Activated CD4-positive, alpha-beta T cell treated with anti-CD3 and anti-CD28 coated beads for 36 hours (primary cell): ENCODE measurements at regions of chr12 and their contacts with region 1.

Region 1: DNA sequence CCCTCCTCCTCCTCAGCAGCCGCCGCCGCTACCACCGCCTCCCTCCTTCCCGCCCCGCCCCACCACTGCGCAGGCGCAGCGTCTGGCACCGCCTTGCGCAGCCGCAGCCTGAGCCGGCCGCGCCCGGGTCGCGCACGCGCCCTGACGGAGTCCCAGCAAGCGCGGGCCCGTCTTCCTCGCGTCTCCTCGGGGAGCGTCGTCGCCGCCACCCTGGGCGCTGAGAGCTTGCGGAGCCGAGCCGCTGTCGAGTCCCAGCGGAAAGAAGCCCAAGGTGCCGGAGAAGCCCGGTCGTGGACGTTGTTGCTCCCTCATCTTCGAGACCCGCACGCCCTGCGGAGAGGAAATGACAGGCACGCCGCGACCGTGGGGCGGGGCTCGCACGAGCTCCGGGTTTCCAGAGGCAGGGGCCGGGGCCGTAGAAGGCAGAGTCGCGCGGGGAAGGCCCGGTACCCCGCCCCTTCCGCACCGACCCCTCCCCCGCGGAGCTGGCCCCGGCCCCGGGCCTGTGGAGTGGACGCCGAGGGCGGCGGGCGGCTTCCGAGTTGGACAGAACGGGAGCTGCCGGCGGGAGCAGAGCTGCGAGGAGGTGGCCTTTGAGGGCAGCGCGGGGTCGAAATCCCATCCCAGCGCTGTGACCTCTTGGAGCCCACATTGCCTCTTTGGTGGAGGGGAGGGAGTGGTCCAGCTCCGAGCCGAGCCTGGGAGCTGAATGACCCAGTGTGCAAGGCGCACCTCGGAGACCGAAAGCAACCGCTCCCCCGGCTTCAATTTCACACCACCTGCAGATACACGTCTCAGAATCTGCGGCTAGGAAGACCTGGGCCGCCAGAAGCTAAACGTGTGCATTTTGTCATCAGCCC is 469 bp upstream of the RAB35 start:
- DNase-seq: peak; percentile 99
- ATAC-seq: peak; percentile 68
- H3K4me3 Mint-ChIP-seq: peak overlapping the region; percentile 85
- H3K27ac Mint-ChIP-seq: peak overlapping the region; percentile 87
- H3K4me1 Mint-ChIP-seq: peaks cover 77% of the 10 kb centered on the region
- H3K27me3 Mint-ChIP-seq: no peaks in the 10 kb centered on the region

Region 2: GRCh38 chr12:119667577-119668323 is 449.3 kb before region 1 on chr12 and contains the start of gene PRKAB1:
- CTCF ChIA-PET with region 1: no interaction called
- POLR2A ChIA-PET with region 1: no interaction called
- intact Hi-C with region 1: loop called in 1 of 2 experiments (anchors 1 kb)
- DNase-seq: peak; percentile 98
- ATAC-seq: peak; percentile 96
- H3K4me3 Mint-ChIP-seq: peak within 1 kb of the TSS; percentile 91
- H3K27ac Mint-ChIP-seq: peak within 1 kb of the TSS; percentile 91
- H3K4me1 Mint-ChIP-seq: peaks cover 48% of the 10 kb centered on the region
- H3K27me3 Mint-ChIP-seq: no peaks in the 10 kb centered on the region
- total RNA-seq, gene PRKAB1: 18.0 to 21.7 TPM

Region 3: DNA sequence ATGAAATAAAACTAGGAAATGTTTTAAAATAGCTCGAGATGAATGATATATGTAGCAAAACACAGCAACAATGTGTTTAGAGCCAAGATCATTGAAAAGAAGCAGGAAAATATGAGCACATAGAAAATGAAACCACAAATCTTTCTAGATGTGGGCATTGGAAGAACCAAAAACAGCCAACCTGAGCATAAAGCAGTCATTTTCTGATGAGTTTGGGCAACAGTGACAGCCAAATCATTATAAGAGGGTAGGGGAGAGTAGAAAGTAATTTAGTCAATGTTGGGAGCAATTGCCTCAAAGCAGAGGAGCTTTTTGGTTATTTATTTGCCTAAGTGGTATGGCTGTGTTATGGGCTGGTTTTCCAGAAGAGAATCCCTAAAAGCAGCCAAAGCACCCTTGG is 136.8 kb before region 1 on chr12:
- CTCF ChIA-PET with region 1: no interaction called
- POLR2A ChIA-PET with region 1: interaction called, 5 read pairs
- intact Hi-C with region 1: loop called in 1 of 2 experiments (anchors 1 kb)
- DNase-seq: peak; percentile 21
- ATAC-seq: peak; percentile 96
- H3K4me3 Mint-ChIP-seq: peak overlapping the region; percentile 30
- H3K27ac Mint-ChIP-seq: peak overlapping the region; percentile 69
- H3K4me1 Mint-ChIP-seq: peaks cover 23% of the 10 kb centered on the region
- H3K27me3 Mint-ChIP-seq: peaks cover 6% of the 10 kb centered on the region

Region 4: DNA sequence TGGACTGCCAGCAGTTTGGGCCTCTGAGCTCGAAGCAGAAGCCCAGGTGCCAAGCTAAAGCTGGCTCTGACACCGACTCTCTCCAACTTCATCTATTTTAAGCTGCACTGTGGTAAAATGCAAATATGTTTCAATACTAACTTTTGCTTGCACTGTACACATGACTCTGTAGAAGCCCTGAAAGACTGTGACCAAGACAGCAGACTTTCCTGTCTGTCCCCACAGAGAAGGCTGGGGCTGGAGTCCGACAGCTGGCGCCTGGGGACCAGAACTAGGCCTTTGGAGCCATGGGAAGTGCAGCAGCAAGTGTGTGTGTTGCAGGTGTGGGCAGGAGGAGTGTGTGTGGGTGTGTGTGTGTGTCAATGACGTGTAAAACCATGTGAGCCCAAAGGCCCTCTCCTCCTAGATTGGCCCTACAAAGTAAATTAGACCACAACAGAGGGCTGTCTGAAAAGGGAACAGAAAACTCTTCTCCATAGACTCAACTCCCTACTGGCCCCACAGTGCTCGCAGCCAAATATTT is 15.9 kb after region 1 on chr12:
- CTCF ChIA-PET with region 1: no interaction called
- POLR2A ChIA-PET with region 1: interaction called, 10 read pairs
- intact Hi-C with region 1: no loop called
- DNase-seq: no peak
- ATAC-seq: no peak
- H3K4me3 Mint-ChIP-seq: no peak overlapping the region
- H3K27ac Mint-ChIP-seq: peak overlapping the region; percentile 25
- H3K4me1 Mint-ChIP-seq: peaks cover 6% of the 10 kb centered on the region
- H3K27me3 Mint-ChIP-seq: no peaks in the 10 kb centered on the region

Region 5: DNA sequence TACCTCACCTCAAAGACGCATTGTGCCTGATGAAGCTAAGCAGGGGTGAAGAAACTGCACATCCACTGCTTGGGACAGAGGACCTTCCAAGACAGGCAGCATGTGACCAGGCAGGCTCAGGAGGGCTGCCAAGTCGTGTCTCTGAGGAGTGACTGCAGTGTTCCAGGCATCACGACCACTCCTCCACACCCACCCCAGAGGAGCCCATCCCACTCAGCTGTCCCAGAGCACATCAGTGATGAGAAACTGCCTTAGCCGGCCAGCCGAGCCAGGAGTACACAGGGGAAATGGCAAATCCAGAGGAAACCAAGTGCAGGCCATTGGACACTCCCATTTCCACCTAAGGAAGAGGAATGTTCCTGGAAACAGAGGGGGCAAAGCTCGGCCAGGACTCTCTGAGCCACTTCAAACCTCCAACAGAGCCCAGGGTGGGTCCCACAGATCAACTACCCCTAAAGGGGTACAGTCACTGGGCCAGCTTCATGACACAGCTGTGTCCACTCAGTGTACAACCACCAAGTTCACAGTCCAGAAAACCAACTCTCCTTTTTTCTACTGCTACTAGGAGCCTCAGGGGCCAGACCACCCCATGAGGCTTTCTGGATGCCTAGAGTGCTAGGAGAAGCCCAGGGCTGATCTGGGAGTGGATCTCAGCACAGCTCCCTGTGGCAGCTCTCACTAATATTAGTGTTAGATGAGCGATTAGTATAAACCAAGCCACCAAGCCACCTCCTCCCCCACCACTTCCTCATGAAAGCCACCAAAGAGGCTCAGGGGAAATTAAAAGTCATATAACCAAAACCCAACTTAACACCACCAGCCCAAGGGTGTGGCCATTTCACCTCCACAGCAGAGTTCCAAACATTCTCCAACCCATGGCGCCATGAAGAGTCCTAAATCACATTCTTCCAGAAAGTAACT is 133.1 kb after region 1 on chr12:
- CTCF ChIA-PET with region 1: no interaction called
- POLR2A ChIA-PET with region 1: no interaction called
- intact Hi-C with region 1: no loop called
- DNase-seq: peak; percentile 51
- ATAC-seq: peak; percentile 10
- H3K4me3 Mint-ChIP-seq: peak overlapping the region; percentile 10
- H3K27ac Mint-ChIP-seq: peak overlapping the region; percentile 74
- H3K4me1 Mint-ChIP-seq: peaks cover 80% of the 10 kb centered on the region
- H3K27me3 Mint-ChIP-seq: no peaks in the 10 kb centered on the region

Region 6: GRCh38 chr12:120265473-120266179 is 148.6 kb after region 1 on chr12 and contains the start of gene PXN:
- CTCF ChIA-PET with region 1: no interaction called
- POLR2A ChIA-PET with region 1: interaction called, 7 read pairs
- intact Hi-C with region 1: loop called in 1 of 2 experiments (anchors 2 kb)
- DNase-seq: peak; percentile 95
- ATAC-seq: peak; percentile 79
- H3K4me3 Mint-ChIP-seq: peak within 1 kb of the TSS; percentile 95
- H3K27ac Mint-ChIP-seq: peak within 1 kb of the TSS; percentile 85
- H3K4me1 Mint-ChIP-seq: peaks cover 46% of the 10 kb centered on the region
- H3K27me3 Mint-ChIP-seq: no peaks in the 10 kb centered on the region
- total RNA-seq, gene PXN: 74.5 to 104 TPM

Region 7: GRCh38 chr12:120481022-120481767 is 364.2 kb after region 1 on chr12:
- CTCF ChIA-PET with region 1: no interaction called
- POLR2A ChIA-PET with region 1: no interaction called
- intact Hi-C with region 1: no loop called
- DNase-seq: no peak
- ATAC-seq: no peak
- H3K4me3 Mint-ChIP-seq: no peak overlapping the region
- H3K27ac Mint-ChIP-seq: no peak overlapping the region
- H3K4me1 Mint-ChIP-seq: no peaks in the 10 kb centered on the region
- H3K27me3 Mint-ChIP-seq: no peaks in the 10 kb centered on the region

Region 8: GRCh38 chr12:120496413-120497340 is 379.7 kb after region 1 on chr12:
- CTCF ChIA-PET with region 1: no interaction called
- POLR2A ChIA-PET with region 1: no interaction called
- intact Hi-C with region 1: no loop called
- DNase-seq: peak; percentile 65
- ATAC-seq: peak; percentile 20
- H3K4me3 Mint-ChIP-seq: peak overlapping the region; percentile 91
- H3K27ac Mint-ChIP-seq: peak overlapping the region; percentile 75
- H3K4me1 Mint-ChIP-seq: peaks cover 32% of the 10 kb centered on the region
- H3K27me3 Mint-ChIP-seq: no peaks in the 10 kb centered on the region